Prostate gland (tissue), 2 donors: ENCODE measurements at regions of chr3 and their contacts with region 1.

Region 1: GRCh38 chr3:13648060-13649001 is 99.4 kb downstream of the FBLN2 start:
- DNase-seq: peak; percentile 79
- H3K4me3 ChIP-seq: no peak overlapping the region
- H3K27ac ChIP-seq: no peak overlapping the region
- H3K4me1 ChIP-seq: no peaks in the 10 kb centered on the region
- H3K27me3 ChIP-seq: no peaks in the 10 kb centered on the region
- CTCF ChIP-seq: peak; percentile 96 to 98 (median 98)
- POLR2A ChIP-seq: no peak

Region 2: GRCh38 chr3:12830785-12831156 is 817.6 kb before region 1 on chr3:
- intact Hi-C with region 1: no loop called
- DNase-seq: no peak
- H3K4me3 ChIP-seq: no peak overlapping the region
- H3K27ac ChIP-seq: no peak overlapping the region
- H3K4me1 ChIP-seq: no peaks in the 10 kb centered on the region
- H3K27me3 ChIP-seq: no peaks in the 10 kb centered on the region
- CTCF ChIP-seq: no peak
- POLR2A ChIP-seq: no peak

Region 3: DNA sequence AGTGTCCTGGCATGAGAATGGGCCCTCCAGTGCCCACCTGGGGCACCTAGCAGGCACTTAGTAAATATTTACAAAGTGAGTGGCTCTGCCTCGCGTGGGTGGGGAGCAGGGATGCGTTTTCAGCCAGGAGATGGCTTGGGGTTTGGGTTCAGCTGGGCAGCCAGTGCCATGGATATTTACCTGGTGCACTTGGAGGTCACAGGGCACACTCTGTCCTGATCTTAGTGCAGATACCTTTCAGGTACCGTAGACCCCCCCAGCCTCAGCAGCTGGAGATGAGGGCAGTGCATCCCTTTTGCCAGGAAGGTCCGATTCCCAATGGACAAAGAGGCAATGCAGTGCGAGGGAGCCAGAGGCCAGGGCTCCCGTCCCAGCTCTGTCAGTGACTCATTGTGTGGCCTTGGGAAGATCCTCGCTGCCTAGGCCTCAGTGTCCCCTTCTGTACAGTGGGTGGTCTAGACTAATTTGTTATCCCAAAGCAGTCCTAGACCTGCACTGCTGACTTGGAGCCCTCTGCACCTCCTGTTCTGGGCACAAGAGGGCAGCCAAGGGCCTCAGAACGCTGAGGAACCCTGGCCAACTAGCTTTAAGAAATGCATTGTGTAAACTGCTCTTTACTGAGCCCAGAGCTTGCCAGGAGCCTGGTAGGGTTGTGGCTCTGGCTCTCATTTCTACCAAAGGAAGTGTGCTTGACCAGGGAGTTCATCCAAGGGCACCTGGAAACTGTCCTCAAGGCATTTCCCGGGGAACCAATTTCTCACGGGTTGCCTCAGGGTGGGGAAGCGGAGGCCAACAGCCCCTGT is 152.2 kb before region 1 on chr3:
- intact Hi-C with region 1: loop called (anchors 1 kb)
- DNase-seq: peak; percentile 84
- H3K4me3 ChIP-seq: no peak overlapping the region
- H3K27ac ChIP-seq: peak overlapping the region in 1 of 2 donors; percentile 8
- H3K4me1 ChIP-seq: no peaks in the 10 kb centered on the region
- H3K27me3 ChIP-seq: no peaks in the 10 kb centered on the region
- CTCF ChIP-seq: peak; percentile 81 to 96 (median 92)
- POLR2A ChIP-seq: no peak